AG04450 (cell line): ENCODE measurements at regions of chr2 and their contacts with region 1.

Region 1: DNA sequence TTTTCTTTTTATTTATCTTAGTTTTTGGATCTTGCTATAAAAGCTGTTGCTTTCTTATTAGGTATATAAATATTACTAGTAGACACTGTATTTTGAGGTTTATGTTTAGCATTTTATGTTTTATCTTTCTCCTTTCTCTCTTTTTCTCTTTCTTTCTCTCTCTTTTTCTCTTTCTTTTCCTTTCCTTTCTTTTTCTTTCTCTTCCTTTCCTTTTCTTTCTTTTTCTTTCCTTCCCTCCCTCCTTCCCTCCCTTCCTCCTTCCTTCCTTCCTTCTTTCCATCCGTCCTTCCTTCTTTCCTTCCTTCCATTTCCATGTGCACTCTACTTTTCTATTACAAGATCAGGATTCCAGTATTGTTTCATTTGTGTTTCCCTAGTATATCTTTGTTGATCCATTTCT is 814.8 kb downstream of the KCNJ3 start:
- DNase-seq: no peak
- H3K4me3 ChIP-seq: no peak overlapping the region
- H3K27ac ChIP-seq: no peak overlapping the region
- H3K27me3 ChIP-seq: no peaks in the 10 kb centered on the region
- CTCF ChIP-seq: no peak

Region 2: GRCh38 chr2:155645771-155646170 is 132.5 kb after region 1 on chr2:
- CTCF ChIA-PET with region 1: interaction called, 12 read pairs
- POLR2A ChIA-PET with region 1: no interaction called
- DNase-seq: no peak
- H3K4me3 ChIP-seq: no peak overlapping the region
- H3K27ac ChIP-seq: no peak overlapping the region
- H3K27me3 ChIP-seq: no peaks in the 10 kb centered on the region
- CTCF ChIP-seq: no peak